T-cell (primary cell): ENCODE measurements at regions of chr3 and their contacts with region 1.

Region 1: GRCh38 chr3:17686613-17687012 is 55.8 kb downstream of the TBC1D5 start:
- DNase-seq: no peak
- ATAC-seq: no peak
- H3K4me3 ChIP-seq: no peak overlapping the region
- H3K4me3 Mint-ChIP-seq: no peak overlapping the region
- H3K27ac ChIP-seq: no peak overlapping the region
- H3K27ac Mint-ChIP-seq: no peak overlapping the region
- H3K4me1 ChIP-seq: no peaks in the 10 kb centered on the region
- H3K4me1 Mint-ChIP-seq: peaks cover 5 to 18% (median 11%) of the 10 kb centered on the region in 3 donors
- H3K27me3 ChIP-seq: no peaks in the 10 kb centered on the region
- H3K27me3 Mint-ChIP-seq: no peaks in the 10 kb centered on the region

Region 2: GRCh38 chr3:17491601-17492000 is 195.0 kb before region 1 on chr3:
- CTCF ChIA-PET with region 1: no interaction called
- POLR2A ChIA-PET with region 1: no interaction called
- DNase-seq: no peak
- ATAC-seq: no peak
- H3K4me3 ChIP-seq: no peak overlapping the region
- H3K4me3 Mint-ChIP-seq: no peak overlapping the region
- H3K27ac ChIP-seq: no peak overlapping the region
- H3K27ac Mint-ChIP-seq: no peak overlapping the region
- H3K4me1 ChIP-seq: no peaks in the 10 kb centered on the region
- H3K4me1 Mint-ChIP-seq: no peaks in the 10 kb centered on the region
- H3K27me3 ChIP-seq: no peaks in the 10 kb centered on the region
- H3K27me3 Mint-ChIP-seq: no peaks in the 10 kb centered on the region

Region 3: DNA sequence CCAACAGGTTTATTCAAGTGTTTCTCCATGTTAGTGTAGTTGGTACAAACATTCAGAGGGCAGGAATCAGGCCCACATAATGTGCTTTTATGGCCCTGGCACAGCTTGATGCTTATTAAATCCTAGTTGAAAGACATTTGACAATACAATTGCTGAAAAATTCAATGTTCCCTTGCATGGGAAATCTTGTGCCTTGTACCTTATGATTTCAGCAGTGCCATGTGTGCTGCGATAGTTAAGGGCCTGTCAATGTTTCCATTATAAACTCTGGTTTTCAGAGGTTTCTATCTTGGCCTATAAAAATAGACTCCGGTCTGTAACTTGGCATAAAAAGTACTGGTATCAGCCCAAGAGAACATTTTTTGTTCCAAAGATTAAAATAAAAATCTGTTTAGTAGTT is 151.3 kb before region 1 on chr3:
- CTCF ChIA-PET with region 1: no interaction called
- POLR2A ChIA-PET with region 1: no interaction called
- DNase-seq: no peak
- ATAC-seq: no peak
- H3K4me3 ChIP-seq: no peak overlapping the region
- H3K4me3 Mint-ChIP-seq: no peak overlapping the region
- H3K27ac ChIP-seq: no peak overlapping the region
- H3K27ac Mint-ChIP-seq: no peak overlapping the region
- H3K4me1 ChIP-seq: no peaks in the 10 kb centered on the region
- H3K4me1 Mint-ChIP-seq: no peaks in the 10 kb centered on the region
- H3K27me3 ChIP-seq: no peaks in the 10 kb centered on the region
- H3K27me3 Mint-ChIP-seq: no peaks in the 10 kb centered on the region

Region 4: GRCh38 chr3:17623464-17623863 is 63.1 kb before region 1 on chr3:
- CTCF ChIA-PET with region 1: no interaction called
- POLR2A ChIA-PET with region 1: no interaction called
- DNase-seq: no peak
- ATAC-seq: no peak
- H3K4me3 ChIP-seq: no peak overlapping the region
- H3K4me3 Mint-ChIP-seq: no peak overlapping the region
- H3K27ac ChIP-seq: no peak overlapping the region
- H3K27ac Mint-ChIP-seq: no peak overlapping the region
- H3K4me1 ChIP-seq: no peaks in the 10 kb centered on the region
- H3K4me1 Mint-ChIP-seq: peaks cover 13 to 20% (median 14%) of the 10 kb centered on the region in 3 donors
- H3K27me3 ChIP-seq: no peaks in the 10 kb centered on the region
- H3K27me3 Mint-ChIP-seq: no peaks in the 10 kb centered on the region

Region 5: GRCh38 chr3:17645072-17645698 is 41.4 kb before region 1 on chr3:
- CTCF ChIA-PET with region 1: no interaction called
- POLR2A ChIA-PET with region 1: interaction called in 1 of 2 experiments, 10 read pairs
- DNase-seq: peak in 1 of 35 experiments; percentile 49
- ATAC-seq: no peak
- H3K4me3 ChIP-seq: no peak overlapping the region
- H3K4me3 Mint-ChIP-seq: no peak overlapping the region
- H3K27ac ChIP-seq: no peak overlapping the region
- H3K27ac Mint-ChIP-seq: no peak overlapping the region
- H3K4me1 ChIP-seq: no peaks in the 10 kb centered on the region
- H3K4me1 Mint-ChIP-seq: peaks cover 0 to 6% (median 6%) of the 10 kb centered on the region in 3 donors
- H3K27me3 ChIP-seq: no peaks in the 10 kb centered on the region
- H3K27me3 Mint-ChIP-seq: no peaks in the 10 kb centered on the region